GM12878 (cell line): ENCODE measurements at regions of chr17 and their contacts with region 1.

Region 1: GRCh38 chr17:55601874-55602364 is 90.7 kb upstream of the SMIM36 start:
- DNase-seq: no peak
- ATAC-seq: peak; percentile 69
- H3K4me3 ChIP-seq: no peak overlapping the region
- H3K27ac ChIP-seq: no peak overlapping the region
- H3K4me1 ChIP-seq: no peaks in the 10 kb centered on the region
- H3K27me3 ChIP-seq: no peaks in the 10 kb centered on the region
- CTCF ChIP-seq: peak; percentile 71 to 77 (median 75)
- EP300 ChIP-seq: no peak
- POLR2A ChIP-seq: no peak
- RAD21 ChIP-seq: peak; percentile 82

Region 2: GRCh38 chr17:55487695-55488429 is 114.1 kb before region 1 on chr17:
- CTCF ChIA-PET with region 1: no interaction called
- POLR2A ChIA-PET with region 1: no interaction called
- RAD21 ChIA-PET with region 1: no interaction called
- SMC1A ChIA-PET with region 1: no interaction called
- in situ Hi-C with region 1: no loop called
- intact Hi-C with region 1: no loop called
- DNase-seq: no peak
- ATAC-seq: no peak
- H3K4me3 ChIP-seq: no peak overlapping the region
- H3K27ac ChIP-seq: no peak overlapping the region
- H3K4me1 ChIP-seq: no peaks in the 10 kb centered on the region; the same call in 1 of the 2 replicates
- H3K27me3 ChIP-seq: no peaks in the 10 kb centered on the region; a peak in 1 of 4 replicates
- CTCF ChIP-seq: no peak
- EP300 ChIP-seq: no peak
- POLR2A ChIP-seq: no peak
- RAD21 ChIP-seq: no peak

Region 3: DNA sequence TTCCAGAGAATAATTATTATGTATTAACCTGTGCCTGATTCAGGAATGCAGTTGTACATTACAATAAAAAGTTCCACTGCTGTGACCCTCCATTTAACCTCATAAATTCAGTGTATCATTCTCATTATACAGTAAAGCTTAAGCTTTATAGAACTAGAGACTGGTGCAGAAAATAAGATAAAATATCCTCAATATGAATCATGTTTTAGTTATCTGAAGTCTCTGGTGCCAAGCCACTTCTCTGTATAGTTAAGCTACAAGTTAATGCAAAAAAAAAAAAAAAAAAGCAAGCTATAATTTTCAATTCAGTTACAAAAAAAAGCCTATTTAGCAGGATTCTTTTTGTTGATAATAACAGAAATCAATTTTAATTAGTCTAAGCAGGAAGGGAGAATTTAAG is 68.3 kb before region 1 on chr17:
- CTCF ChIA-PET with region 1: interaction called, 123 read pairs
- POLR2A ChIA-PET with region 1: no interaction called
- RAD21 ChIA-PET with region 1: interaction called, 4 read pairs
- SMC1A ChIA-PET with region 1: interaction called, 34 read pairs
- in situ Hi-C with region 1: loop called (anchors 5 kb)
- intact Hi-C with region 1: no loop called
- DNase-seq: no peak
- ATAC-seq: no peak
- H3K4me3 ChIP-seq: no peak overlapping the region
- H3K27ac ChIP-seq: no peak overlapping the region
- H3K4me1 ChIP-seq: no peaks in the 10 kb centered on the region
- H3K27me3 ChIP-seq: no peaks in the 10 kb centered on the region; a peak in 2 of 4 replicates
- CTCF ChIP-seq: no peak
- EP300 ChIP-seq: no peak
- POLR2A ChIP-seq: no peak
- RAD21 ChIP-seq: no peak

Region 4: GRCh38 chr17:55549140-55549539 is 52.8 kb before region 1 on chr17:
- CTCF ChIA-PET with region 1: interaction called, 11 read pairs
- POLR2A ChIA-PET with region 1: no interaction called
- RAD21 ChIA-PET with region 1: interaction called, 3 read pairs
- SMC1A ChIA-PET with region 1: interaction called, 7 read pairs
- in situ Hi-C with region 1: no loop called
- intact Hi-C with region 1: loop called (anchors 1 kb)
- DNase-seq: no peak
- ATAC-seq: peak; percentile 69
- H3K4me3 ChIP-seq: no peak overlapping the region
- H3K27ac ChIP-seq: no peak overlapping the region
- H3K4me1 ChIP-seq: no peaks in the 10 kb centered on the region
- H3K27me3 ChIP-seq: no peaks in the 10 kb centered on the region; a peak in 3 of 4 replicates
- CTCF ChIP-seq: peak; percentile 47 to 56 (median 51); a peak in 5 of 6 replicates
- EP300 ChIP-seq: no peak
- POLR2A ChIP-seq: no peak
- RAD21 ChIP-seq: peak; percentile 72

Region 5: GRCh38 chr17:55564081-55564480 is 37.8 kb before region 1 on chr17:
- CTCF ChIA-PET with region 1: no interaction called
- POLR2A ChIA-PET with region 1: no interaction called
- RAD21 ChIA-PET with region 1: no interaction called
- SMC1A ChIA-PET with region 1: no interaction called
- in situ Hi-C with region 1: no loop called
- intact Hi-C with region 1: no loop called
- DNase-seq: no peak
- ATAC-seq: no peak
- H3K4me3 ChIP-seq: no peak overlapping the region
- H3K27ac ChIP-seq: no peak overlapping the region
- H3K4me1 ChIP-seq: no peaks in the 10 kb centered on the region
- H3K27me3 ChIP-seq: no peaks in the 10 kb centered on the region; a peak in 1 of 4 replicates
- CTCF ChIP-seq: no peak
- EP300 ChIP-seq: no peak
- POLR2A ChIP-seq: no peak
- RAD21 ChIP-seq: no peak